Cardiac septum (tissue), 1 donor: ENCODE measurements at regions of chr3 and their contacts with region 1.

Region 1: DNA sequence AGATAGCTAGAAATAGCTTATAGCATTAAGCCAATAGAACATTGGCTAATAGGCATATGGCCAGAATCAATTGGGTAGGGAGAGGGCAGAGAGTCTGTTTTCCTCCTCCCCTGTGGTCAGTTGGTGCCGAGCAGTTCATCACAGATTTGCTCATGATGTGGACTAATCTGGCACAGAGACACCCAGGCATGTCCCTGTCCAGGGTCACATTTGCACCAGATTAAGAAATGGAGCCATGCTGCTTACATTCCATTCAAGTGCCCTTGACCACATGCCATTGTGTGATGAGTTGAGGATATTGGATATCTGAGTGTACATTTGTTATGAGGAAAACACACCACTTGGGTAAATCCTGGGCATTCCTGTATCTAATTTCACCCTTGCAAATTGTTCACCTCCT is 53.4 kb downstream of the USP13 start:
- DNase-seq: no peak

Region 2: GRCh38 chr3:179666436-179667035 is 39.7 kb before region 1 on chr3:
- intact Hi-C with region 1: loop called (anchors 5 kb)
- DNase-seq: peak; percentile 82